A673 (cell line): ENCODE measurements at regions of chrX and their contacts with region 1.

Region 1: GRCh38 chrX:19747652-19748610 is 139.5 kb downstream of the SH3KBP1 start:
- DNase-seq: no peak
- H3K4me3 ChIP-seq: no peak overlapping the region
- H3K27ac ChIP-seq: no peak overlapping the region
- H3K4me1 ChIP-seq: peaks cover 8% of the 10 kb centered on the region
- H3K27me3 ChIP-seq: no peaks in the 10 kb centered on the region
- CTCF ChIP-seq: no peak

Region 2: GRCh38 chrX:19487520-19488200 is 260.3 kb before region 1 on chrX:
- CTCF ChIA-PET with region 1: no interaction called
- POLR2A ChIA-PET with region 1: interaction called, 10 read pairs
- intact Hi-C with region 1: no loop called
- DNase-seq: no peak
- H3K4me3 ChIP-seq: no peak overlapping the region
- H3K27ac ChIP-seq: no peak overlapping the region
- H3K4me1 ChIP-seq: no peaks in the 10 kb centered on the region
- H3K27me3 ChIP-seq: no peaks in the 10 kb centered on the region
- CTCF ChIP-seq: no peak